ENCODE measurements at regions of chr10 and their contacts with region 1.

Region 1: GRCh38 chr10:99620713-99621453 is 644 bp upstream of the SLC25A28 start:
- DNase-seq: peak; percentile 95 to 97 (median 97)
- ATAC-seq: peak; percentile 96
- H3K4me3 ChIP-seq: peak overlapping the region; percentile 54
- H3K27ac ChIP-seq: peak overlapping the region; percentile 97
- H3K4me1 ChIP-seq: no peaks in the 10 kb centered on the region
- H3K27me3 ChIP-seq: no peaks in the 10 kb centered on the region

Region 2: DNA sequence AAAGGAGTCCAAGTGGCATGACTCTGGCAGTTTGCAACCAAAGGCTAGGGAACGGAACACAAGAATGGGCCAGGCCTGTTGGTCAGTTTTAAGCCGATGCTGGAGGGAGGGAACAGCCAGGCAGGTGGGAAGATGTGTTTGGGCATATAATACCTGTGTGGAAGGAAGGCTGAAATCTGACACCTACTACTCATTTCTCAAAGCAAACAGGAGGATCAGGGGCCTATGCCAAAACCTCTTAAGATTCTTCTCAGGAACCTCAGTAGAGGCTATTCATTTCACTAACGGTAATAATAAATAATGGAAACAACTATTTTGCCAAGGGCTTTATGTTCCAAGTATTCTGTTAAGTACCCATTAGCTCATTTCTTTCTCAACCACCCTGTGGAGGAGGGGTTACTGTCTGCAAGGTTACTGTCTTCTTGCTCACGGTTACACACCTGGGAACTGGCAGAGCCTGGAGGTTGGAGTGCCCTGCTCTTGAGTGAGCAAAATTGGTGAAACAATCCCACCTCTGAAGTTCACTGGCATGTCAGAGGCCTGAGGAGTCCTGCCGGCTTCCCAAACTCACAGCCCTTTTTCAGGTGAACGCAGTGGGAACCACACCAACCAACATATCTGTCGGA is 226.0 kb before region 1 on chr10:
- intact Hi-C with region 1: loop called in 1 of 4 experiments (anchors 5 kb)
- DNase-seq: no peak
- ATAC-seq: no peak
- H3K4me3 ChIP-seq: no peak overlapping the region
- H3K27ac ChIP-seq: peak overlapping the region; percentile 25
- H3K4me1 ChIP-seq: peaks cover 3% of the 10 kb centered on the region
- H3K27me3 ChIP-seq: no peaks in the 10 kb centered on the region

Region 3: GRCh38 chr10:99430451-99431189 is 190.3 kb before region 1 on chr10 and contains the start of gene GOT1:
- intact Hi-C with region 1: loop called in 1 of 4 experiments (anchors 5 kb)
- DNase-seq: peak; percentile 95 to 97 (median 96)
- ATAC-seq: peak; percentile 98 to 99
- H3K4me3 ChIP-seq: peak within 1 kb of the TSS; percentile 64
- H3K27ac ChIP-seq: peak within 1 kb of the TSS; percentile 97
- H3K4me1 ChIP-seq: peaks cover 1% of the 10 kb centered on the region
- H3K27me3 ChIP-seq: no peaks in the 10 kb centered on the region
- total RNA-seq, gene GOT1: 344 to 515 (median 449) TPM

Region 4: GRCh38 chr10:99709480-99710229 is 88.8 kb after region 1 on chr10:
- intact Hi-C with region 1: loop called in 1 of 4 experiments (anchors 10 kb)
- DNase-seq: no peak
- ATAC-seq: no peak
- H3K4me3 ChIP-seq: no peak overlapping the region
- H3K27ac ChIP-seq: no peak overlapping the region
- H3K4me1 ChIP-seq: peaks cover 2% of the 10 kb centered on the region
- H3K27me3 ChIP-seq: no peaks in the 10 kb centered on the region